Activated CD4-positive, alpha-beta memory T cell treated with anti-CD3 and anti-CD28 coated beads for 36 hours (primary cell): ENCODE measurements at regions of chr16 and their contacts with region 1.

Region 1: GRCh38 chr16:27972500-27972899 is 91.0 kb downstream of the GSG1L start:
- DNase-seq: peak; percentile 58
- H3K4me3 Mint-ChIP-seq: no peak overlapping the region
- H3K27ac Mint-ChIP-seq: no peak overlapping the region
- H3K4me1 Mint-ChIP-seq: peaks cover 4% of the 10 kb centered on the region
- H3K27me3 Mint-ChIP-seq: peaks cover 5% of the 10 kb centered on the region

Region 2: GRCh38 chr16:28067604-28068379 is 95.3 kb after region 1 on chr16:
- CTCF ChIA-PET with region 1: interaction called, 92 read pairs
- POLR2A ChIA-PET with region 1: no interaction called
- intact Hi-C with region 1: loop called (anchors 1 kb)
- DNase-seq: no peak
- H3K4me3 Mint-ChIP-seq: no peak overlapping the region
- H3K27ac Mint-ChIP-seq: no peak overlapping the region
- H3K4me1 Mint-ChIP-seq: peaks cover 2% of the 10 kb centered on the region
- H3K27me3 Mint-ChIP-seq: peaks cover 10% of the 10 kb centered on the region